ENCODE measurements at regions of chr22 and their contacts with region 1.

Region 1: DNA sequence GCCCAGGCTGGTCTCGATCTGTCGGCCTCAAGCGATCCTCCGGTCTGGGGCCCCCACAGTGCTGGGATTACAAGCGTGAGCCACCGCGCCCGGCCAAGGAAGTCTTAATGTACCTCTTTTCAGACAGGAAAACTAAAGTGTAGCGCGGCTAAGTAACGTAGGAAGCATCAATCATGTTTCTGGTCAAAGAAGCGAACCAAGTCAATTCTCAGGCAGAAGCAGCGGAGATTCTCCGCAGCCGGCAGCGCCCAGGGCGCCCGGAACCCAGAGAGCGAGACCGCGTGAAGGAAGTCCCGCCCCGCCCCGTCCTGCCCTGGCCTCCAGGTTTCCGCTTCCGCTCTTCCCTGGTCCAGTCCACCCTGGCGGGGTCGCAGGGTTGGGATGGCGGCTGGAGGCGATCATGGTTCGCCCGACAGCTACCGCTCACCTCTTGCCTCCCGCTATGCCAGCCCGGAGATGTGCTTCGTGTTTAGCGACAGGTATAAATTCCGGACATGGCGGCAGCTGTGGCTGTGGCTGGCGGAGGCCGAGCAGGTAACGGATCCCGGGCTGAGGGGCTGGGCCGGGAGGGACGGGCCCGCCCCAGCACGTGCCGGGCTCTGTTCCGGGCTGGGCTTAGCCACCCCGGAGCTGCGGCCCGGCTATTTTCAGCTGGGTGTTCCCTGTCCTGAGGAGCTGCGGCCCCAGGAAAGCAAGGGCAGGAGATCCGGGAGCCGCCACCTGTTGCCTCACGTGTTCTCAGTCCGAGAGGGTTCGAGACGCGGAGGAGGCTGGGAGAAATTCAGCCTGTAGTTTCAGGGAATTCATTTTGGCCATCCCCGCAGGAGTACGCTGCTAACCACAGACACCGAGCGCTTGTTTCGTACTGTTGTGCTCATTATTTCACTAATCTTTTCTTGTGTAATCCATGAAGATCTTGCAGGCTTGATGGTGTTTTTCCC is at the start of gene ADSL:
- DNase-seq: peak; percentile 83
- H3K4me3 Mint-ChIP-seq: peak within 1 kb of the TSS; percentile 96
- H3K27ac Mint-ChIP-seq: peak within 1 kb of the TSS; percentile 98
- H3K4me1 Mint-ChIP-seq: peaks cover 37% of the 10 kb centered on the region
- H3K27me3 Mint-ChIP-seq: no peaks in the 10 kb centered on the region
- total RNA-seq, gene ADSL: 142 and 160 TPM in 2 replicates

Region 2: GRCh38 chr22:40044102-40044869 is 302.2 kb before region 1 on chr22:
- intact Hi-C with region 1: loop called (anchors 2 kb)
- DNase-seq: peak; percentile 99
- H3K4me3 Mint-ChIP-seq: peak overlapping the region; percentile 98
- H3K27ac Mint-ChIP-seq: peak overlapping the region; percentile 100
- H3K4me1 Mint-ChIP-seq: peaks cover 27% of the 10 kb centered on the region
- H3K27me3 Mint-ChIP-seq: peaks cover 6% of the 10 kb centered on the region

Region 3: DNA sequence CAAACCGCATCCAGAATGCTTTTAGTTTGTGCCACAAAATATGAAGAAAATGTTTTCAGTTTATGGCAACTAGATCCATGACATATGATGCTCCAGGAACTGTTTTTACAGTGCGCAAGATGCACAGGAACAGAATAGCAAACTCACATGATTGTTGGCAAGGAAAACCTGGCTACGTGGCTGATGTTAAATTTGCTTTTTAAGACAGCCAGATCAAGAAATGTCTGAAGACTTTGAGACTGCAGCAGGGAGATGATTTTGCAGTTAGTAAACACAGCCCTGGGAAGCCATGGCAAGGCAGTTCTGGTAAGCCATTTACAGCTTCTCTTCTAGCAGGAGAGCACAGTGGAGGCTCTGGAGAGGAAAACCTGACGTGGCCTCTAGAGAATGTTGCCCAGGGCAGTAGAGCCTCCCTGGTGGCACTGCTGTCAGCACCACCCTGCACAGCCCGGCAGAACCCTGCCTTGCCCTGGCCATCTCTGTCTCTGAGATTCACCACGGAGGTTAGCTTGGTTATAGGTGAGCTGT is 238.5 kb before region 1 on chr22:
- intact Hi-C with region 1: loop called (anchors 10 kb)
- DNase-seq: peak; percentile 25
- H3K4me3 Mint-ChIP-seq: peak overlapping the region; percentile 76
- H3K27ac Mint-ChIP-seq: peak overlapping the region; percentile 84
- H3K4me1 Mint-ChIP-seq: peaks cover 47% of the 10 kb centered on the region
- H3K27me3 Mint-ChIP-seq: no peaks in the 10 kb centered on the region

Region 4: DNA sequence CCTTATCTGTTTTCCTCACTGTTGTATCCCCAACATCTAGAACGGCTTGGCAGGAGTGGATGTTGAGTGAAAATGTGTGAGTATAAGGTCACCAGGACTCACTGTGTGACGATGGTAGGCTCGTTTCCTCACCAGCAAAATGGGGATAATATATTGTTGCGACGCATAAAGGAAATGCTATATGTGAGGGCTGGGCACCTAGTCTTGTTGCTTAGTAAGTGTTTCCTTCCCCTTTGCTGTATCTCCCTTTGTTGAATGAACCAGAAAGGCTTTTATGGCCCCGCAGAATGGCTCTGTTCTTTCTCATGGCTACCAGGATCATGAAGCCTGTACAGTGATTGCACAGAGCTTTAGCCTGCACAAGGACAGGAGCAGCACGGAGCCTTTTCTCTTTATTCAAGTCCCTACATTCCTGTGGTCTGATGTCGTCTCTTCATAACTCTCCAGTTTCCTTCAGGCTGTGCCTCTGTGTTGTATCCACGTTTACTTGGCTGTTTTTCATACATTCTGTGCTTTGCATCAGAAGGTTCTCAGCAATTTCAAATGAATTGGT is 163.3 kb before region 1 on chr22:
- intact Hi-C with region 1: no loop called
- DNase-seq: no peak
- H3K4me3 Mint-ChIP-seq: peak overlapping the region; percentile 18
- H3K27ac Mint-ChIP-seq: peak overlapping the region; percentile 64
- H3K4me1 Mint-ChIP-seq: peaks cover 53% of the 10 kb centered on the region
- H3K27me3 Mint-ChIP-seq: no peaks in the 10 kb centered on the region

Region 5: GRCh38 chr22:40243891-40244290 is 102.6 kb before region 1 on chr22:
- intact Hi-C with region 1: loop called (anchors 5 kb)
- DNase-seq: no peak
- H3K4me3 Mint-ChIP-seq: peak overlapping the region; percentile 21
- H3K27ac Mint-ChIP-seq: peak overlapping the region; percentile 17
- H3K4me1 Mint-ChIP-seq: peaks cover 64% of the 10 kb centered on the region
- H3K27me3 Mint-ChIP-seq: no peaks in the 10 kb centered on the region

Region 6: GRCh38 chr22:40326905-40327735 is 19.3 kb before region 1 on chr22:
- intact Hi-C with region 1: loop called (anchors 2 kb)
- DNase-seq: no peak
- H3K4me3 Mint-ChIP-seq: no peak overlapping the region
- H3K27ac Mint-ChIP-seq: no peak overlapping the region
- H3K4me1 Mint-ChIP-seq: peaks cover 89% of the 10 kb centered on the region
- H3K27me3 Mint-ChIP-seq: no peaks in the 10 kb centered on the region

Measured in activated T-helper 2 cell treated with anti-CD3 and anti-CD28 coated beads, Interferon-gamma antibody, Interleukin-2, Interleukin-4, amounts not matched to agents 10 μg/mL and 5 μg/mL and 100 μg/mL, durations not matched to agents 14 hours and 24 hours and 36 hours (primary cell).